Activated naive CD4-positive, alpha-beta T cell treated with anti-CD3 and anti-CD28 coated beads, Interleukin-2, amount 10 ng/mL, durations not matched to agents 7 days and 5 days (primary cell): ENCODE measurements at regions of chr1 and their contacts with region 1.

Region 1: GRCh38 chr1:200558866-200559459 is 61.6 kb downstream of the KIF14 start:
- DNase-seq: peak; percentile 30
- H3K4me3 Mint-ChIP-seq: no peak overlapping the region
- H3K27ac Mint-ChIP-seq: no peak overlapping the region
- H3K4me1 Mint-ChIP-seq: peaks cover 12% of the 10 kb centered on the region
- H3K27me3 Mint-ChIP-seq: no peaks in the 10 kb centered on the region

Region 2: DNA sequence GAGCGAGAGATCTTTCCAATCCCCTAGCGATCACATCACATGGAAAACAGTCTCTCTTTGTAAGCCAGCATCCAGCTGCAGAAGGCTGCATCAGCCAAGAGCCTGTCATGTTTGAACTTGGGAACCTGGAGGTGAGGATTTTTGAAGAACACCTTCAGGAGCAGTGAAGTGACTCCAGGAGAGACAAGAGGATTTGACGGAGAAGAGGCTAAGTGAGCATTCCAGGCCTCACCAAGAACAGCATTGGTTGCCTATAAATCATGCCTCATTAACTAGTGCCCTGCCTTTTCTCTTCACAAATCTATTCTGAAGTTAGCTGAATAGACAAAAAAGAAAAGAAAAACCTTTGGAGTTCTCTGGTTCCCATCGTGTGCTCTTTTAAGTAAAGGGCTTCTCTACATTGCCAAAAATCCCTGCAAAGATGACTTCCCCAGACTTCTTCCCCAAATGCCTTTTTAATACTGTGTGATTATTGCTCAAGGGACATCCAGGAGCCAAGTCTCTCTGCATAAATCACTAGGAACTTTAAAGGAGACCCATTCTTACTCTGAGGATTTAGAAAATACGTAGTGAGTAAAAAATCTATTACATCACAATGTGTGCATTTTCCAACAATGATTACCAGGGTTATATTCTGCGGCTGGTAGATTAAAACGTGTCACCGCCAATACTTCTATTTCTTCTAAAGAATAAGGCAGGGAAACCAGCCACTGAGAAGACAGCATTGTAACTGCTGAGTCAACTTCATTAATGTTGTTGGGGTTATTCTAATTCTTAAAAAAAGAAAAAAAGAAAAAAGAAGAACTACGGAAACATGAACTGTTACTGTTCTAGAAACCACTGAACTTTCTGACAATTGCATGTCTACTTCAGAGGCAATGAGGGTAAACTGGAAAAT is 33.6 kb before region 1 on chr1:
- CTCF ChIA-PET with region 1: no interaction called
- DNase-seq: no peak
- H3K4me3 Mint-ChIP-seq: no peak overlapping the region
- H3K27ac Mint-ChIP-seq: no peak overlapping the region
- H3K4me1 Mint-ChIP-seq: peaks cover 15% of the 10 kb centered on the region
- H3K27me3 Mint-ChIP-seq: peaks cover 11% of the 10 kb centered on the region

Region 3: DNA sequence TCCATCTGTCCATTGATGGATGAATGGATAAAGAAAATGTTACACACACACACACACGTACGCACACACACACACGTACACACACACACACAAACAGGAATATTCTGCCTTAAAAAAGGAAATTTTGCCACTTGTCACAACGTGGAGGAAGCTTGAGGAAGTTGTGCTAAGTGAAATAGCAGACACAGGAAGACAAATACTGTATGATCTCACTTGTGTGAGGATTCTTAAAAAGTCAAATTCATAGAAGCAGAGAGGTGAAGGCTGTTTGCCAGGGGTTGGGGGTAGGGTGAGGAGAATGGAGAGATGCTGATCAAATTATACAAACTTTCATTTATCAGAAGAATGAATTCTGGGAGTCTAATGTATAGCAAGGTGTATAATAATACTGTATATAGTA is 11.6 kb before region 1 on chr1:
- CTCF ChIA-PET with region 1: interaction called, 10 read pairs
- DNase-seq: no peak
- H3K4me3 Mint-ChIP-seq: no peak overlapping the region
- H3K27ac Mint-ChIP-seq: no peak overlapping the region
- H3K4me1 Mint-ChIP-seq: peaks cover 13% of the 10 kb centered on the region
- H3K27me3 Mint-ChIP-seq: peaks cover 5% of the 10 kb centered on the region